ENCODE measurements at regions of chr3 and their contacts with region 1.

Region 1: DNA sequence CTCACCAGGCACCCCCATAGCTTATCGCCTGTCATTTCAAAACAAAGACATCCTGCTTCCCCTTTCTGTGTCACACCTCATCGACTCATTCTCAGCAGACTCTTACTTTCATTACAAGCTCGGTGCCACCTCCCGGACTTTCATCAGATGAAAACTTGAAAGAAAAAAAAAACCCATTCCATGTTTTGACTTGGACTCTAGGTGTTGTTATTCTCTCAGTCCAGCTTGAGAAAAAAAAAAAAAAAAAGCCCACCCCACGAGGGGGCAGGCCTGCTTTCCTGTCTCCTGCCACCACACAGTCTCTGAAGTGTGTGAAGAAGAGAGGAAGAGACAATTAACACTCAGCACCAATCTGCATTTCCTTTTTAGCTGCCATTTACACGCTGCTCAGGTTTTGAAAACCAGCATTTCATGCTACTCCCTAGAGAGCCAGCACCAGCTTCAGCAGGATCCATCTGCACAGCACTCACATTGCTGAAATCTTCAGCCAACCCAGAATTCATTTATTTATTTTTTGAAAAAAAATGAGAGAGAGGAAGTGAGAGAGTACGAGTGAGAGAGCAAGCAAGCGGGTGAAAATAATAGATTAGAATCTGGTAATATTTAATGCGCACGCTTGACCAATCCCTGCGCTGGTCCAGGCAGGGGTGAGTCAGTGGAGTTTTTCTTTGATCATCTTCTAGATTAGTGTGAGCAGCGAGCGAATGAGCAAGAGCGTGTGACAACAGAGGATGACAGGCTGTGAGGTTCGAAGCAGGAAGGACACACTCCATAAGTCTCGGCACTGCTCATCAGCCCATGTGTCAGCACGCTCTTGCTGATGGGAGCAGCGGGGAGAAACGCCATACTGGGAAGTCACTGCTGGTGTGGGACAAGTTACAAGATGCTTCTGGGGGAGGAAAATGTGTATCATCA is 23.5 kb downstream of the ZNF80 start:
- DNase-seq: peak; percentile 64
- ATAC-seq: peak; percentile 71
- H3K4me3 Mint-ChIP-seq: no peak overlapping the region
- H3K27ac Mint-ChIP-seq: no peak overlapping the region
- H3K4me1 Mint-ChIP-seq: peaks cover 27% of the 10 kb centered on the region
- H3K27me3 Mint-ChIP-seq: no peaks in the 10 kb centered on the region
- CTCF ChIP-seq: no peak

Region 2: DNA sequence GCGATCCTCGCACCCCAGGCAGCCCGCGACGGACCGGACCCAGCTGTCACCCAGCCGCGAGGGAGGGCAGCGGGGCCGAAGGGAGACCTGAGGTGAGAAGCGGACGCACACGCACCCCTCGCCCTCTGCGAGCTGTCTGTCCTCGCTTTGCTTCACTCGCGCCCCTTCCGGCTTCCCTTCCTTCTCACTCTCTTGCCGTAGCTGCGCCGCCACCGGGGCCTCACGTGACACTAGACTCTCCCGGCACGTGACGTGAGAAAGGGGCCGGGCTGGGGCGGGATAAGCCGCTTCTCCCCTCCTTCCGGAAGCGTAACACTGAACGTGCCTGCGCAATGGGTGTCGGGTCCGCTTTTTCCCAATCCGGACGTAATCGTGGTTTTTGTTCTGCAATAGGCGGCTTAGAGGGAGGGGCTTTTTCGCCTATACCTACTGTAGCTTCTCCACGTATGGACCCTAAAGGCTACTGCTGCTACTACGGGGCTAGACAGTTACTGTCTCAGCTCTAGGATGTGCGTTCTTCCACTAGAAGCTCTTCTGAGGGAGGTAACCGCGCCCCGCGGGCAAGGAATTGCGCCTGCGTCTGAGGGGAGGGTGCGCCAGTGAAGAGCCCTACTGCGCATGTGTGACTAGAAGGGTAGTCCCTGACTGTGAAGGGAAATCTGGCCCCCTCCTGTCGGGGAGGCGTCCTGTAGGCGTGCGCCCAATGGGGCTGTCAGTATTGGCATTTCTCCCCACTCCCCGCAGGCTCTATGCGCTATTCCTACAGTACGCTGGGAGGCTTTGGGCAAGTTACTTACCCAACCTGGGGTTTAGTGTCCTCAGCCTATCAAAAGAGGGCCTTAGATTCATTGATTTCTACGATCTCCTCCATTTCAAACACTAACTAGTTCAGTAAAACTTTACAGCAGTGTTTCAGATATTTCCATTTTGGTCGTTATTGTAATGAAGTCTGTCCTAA is 1651.9 kb before region 1 on chr3 and contains the starts of genes ATG3 and SLC35A5:
- CTCF ChIA-PET with region 1: no interaction called
- POLR2A ChIA-PET with region 1: no interaction called
- intact Hi-C with region 1: loop called (anchors 5 kb)
- DNase-seq: peak; percentile 99
- ATAC-seq: peak; percentile 80
- H3K4me3 Mint-ChIP-seq: peak within 1 kb of the TSS; percentile 99
- H3K27ac Mint-ChIP-seq: peak within 1 kb of the TSS; percentile 99
- H3K4me1 Mint-ChIP-seq: peaks cover 50% of the 10 kb centered on the region
- H3K27me3 Mint-ChIP-seq: no peaks in the 10 kb centered on the region
- CTCF ChIP-seq: no peak
- total RNA-seq, gene ATG3: 48.3 and 54.9 TPM in 2 replicates
- total RNA-seq, gene SLC35A5: 25.1 and 26.6 TPM in 2 replicates

Region 3: DNA sequence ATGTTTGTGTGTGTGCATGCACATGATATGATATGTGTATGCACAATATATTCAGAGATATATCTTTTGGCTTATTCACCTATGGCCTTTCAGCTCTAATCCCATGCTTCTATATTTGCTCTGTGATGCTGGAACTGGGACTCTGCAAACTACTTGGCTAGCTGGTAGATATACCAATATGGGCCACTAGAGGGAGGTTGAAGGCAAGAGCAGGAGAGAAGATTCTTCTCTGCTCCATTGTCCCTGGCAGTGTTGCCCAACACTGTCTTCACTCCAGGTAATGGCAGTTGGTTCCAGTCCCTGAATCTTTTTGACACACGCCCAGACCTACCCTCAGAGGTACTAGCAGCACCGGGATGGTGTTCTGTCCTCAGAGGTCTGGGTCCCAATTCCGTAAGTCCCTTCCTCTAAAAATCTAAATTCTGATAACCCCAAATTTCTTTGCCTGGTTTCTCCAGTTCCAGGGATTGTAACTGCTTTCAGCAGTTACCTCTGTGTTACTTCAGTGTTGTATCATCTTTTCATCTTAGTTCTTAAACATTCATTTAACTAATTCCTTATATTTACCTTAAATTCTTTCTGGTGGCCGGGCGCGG is 1178.4 kb before region 1 on chr3:
- CTCF ChIA-PET with region 1: no interaction called
- POLR2A ChIA-PET with region 1: no interaction called
- intact Hi-C with region 1: no loop called
- DNase-seq: no peak
- ATAC-seq: peak; percentile 88
- H3K4me3 Mint-ChIP-seq: no peak overlapping the region
- H3K27ac Mint-ChIP-seq: no peak overlapping the region
- H3K4me1 Mint-ChIP-seq: no peaks in the 10 kb centered on the region
- H3K27me3 Mint-ChIP-seq: no peaks in the 10 kb centered on the region
- CTCF ChIP-seq: no peak

Region 4: GRCh38 chr3:113731694-113732093 is 482.2 kb before region 1 on chr3:
- CTCF ChIA-PET with region 1: no interaction called
- POLR2A ChIA-PET with region 1: no interaction called
- intact Hi-C with region 1: no loop called
- DNase-seq: no peak
- ATAC-seq: no peak
- H3K4me3 Mint-ChIP-seq: no peak overlapping the region
- H3K27ac Mint-ChIP-seq: no peak overlapping the region
- H3K4me1 Mint-ChIP-seq: peaks cover 14% of the 10 kb centered on the region
- H3K27me3 Mint-ChIP-seq: no peaks in the 10 kb centered on the region
- CTCF ChIP-seq: no peak

Region 5: GRCh38 chr3:113985541-113985940 is 228.3 kb before region 1 on chr3:
- CTCF ChIA-PET with region 1: interaction called, 3 read pairs
- POLR2A ChIA-PET with region 1: interaction called, 10 read pairs
- intact Hi-C with region 1: no loop called
- DNase-seq: no peak
- ATAC-seq: peak; percentile 89
- H3K4me3 Mint-ChIP-seq: peak overlapping the region; percentile 56
- H3K27ac Mint-ChIP-seq: peak overlapping the region; percentile 88
- H3K4me1 Mint-ChIP-seq: peaks cover 57% of the 10 kb centered on the region
- H3K27me3 Mint-ChIP-seq: no peaks in the 10 kb centered on the region
- CTCF ChIP-seq: no peak

Region 6: GRCh38 chr3:114152519-114153151 is 61.2 kb before region 1 on chr3:
- CTCF ChIA-PET with region 1: interaction called, 25 read pairs
- POLR2A ChIA-PET with region 1: interaction called, 50 read pairs
- intact Hi-C with region 1: loop called (anchors 1 kb)
- DNase-seq: peak; percentile 78
- ATAC-seq: peak; percentile 98
- H3K4me3 Mint-ChIP-seq: peak overlapping the region; percentile 68
- H3K27ac Mint-ChIP-seq: peak overlapping the region; percentile 47
- H3K4me1 Mint-ChIP-seq: peaks cover 11% of the 10 kb centered on the region
- H3K27me3 Mint-ChIP-seq: no peaks in the 10 kb centered on the region
- CTCF ChIP-seq: peak; percentile 18

Region 7: GRCh38 chr3:114186501-114186900 is 27.4 kb before region 1 on chr3:
- CTCF ChIA-PET with region 1: no interaction called
- POLR2A ChIA-PET with region 1: no interaction called
- intact Hi-C with region 1: no loop called
- DNase-seq: no peak
- ATAC-seq: no peak
- H3K4me3 Mint-ChIP-seq: no peak overlapping the region
- H3K27ac Mint-ChIP-seq: no peak overlapping the region
- H3K4me1 Mint-ChIP-seq: no peaks in the 10 kb centered on the region
- H3K27me3 Mint-ChIP-seq: peaks cover 2% of the 10 kb centered on the region
- CTCF ChIP-seq: no peak

Region 8: DNA sequence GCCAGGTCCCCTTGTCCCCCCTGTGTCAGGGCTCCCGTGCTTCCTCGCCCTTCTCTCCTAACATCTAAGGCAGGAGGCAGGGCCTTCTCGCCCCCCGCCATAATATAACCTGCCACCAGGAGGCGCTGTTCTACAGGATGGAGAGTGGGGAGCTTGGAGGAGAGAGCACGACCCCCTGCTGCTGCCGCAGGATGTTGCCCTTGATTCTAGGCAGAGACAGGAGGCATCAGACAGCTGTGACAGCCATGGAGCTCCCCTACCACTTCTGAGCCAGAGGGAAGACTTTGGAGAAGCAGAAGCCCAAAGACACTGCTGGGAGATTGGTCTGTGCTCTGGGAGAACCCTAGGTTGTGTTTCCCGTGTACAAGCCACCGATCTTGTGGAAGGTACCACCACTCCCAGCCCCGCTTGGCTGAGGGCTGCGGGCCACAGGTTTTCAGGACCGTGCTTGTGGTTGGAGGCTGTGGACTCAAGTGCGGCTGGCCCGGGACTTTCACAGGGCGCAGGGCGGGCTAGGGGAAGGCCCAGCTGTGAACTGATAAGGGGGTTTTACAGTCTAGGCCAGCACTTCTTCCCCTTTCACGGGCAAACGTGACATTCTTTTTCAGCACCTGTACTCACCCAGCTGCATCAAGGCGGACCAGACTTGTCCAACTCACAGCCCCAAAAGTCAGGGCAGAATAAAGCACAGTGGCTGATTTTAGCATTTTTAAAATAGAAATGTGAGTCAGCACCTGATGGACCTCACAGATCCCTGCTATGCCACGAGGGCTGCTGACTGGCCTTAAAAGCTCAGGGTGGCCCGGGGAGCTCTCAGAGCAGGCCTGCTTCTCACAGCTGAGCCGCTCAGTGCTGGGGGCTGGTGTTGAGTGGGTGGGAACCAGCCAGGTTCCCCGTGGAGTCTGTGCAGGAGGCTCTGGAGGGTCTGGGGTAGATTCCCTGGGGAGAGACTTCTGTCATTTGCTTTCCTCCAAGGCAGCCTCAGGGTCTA is 77.3 kb after region 1 on chr3:
- CTCF ChIA-PET with region 1: interaction called, 66 read pairs
- POLR2A ChIA-PET with region 1: interaction called, 334 read pairs
- intact Hi-C with region 1: loop called (anchors 1 kb)
- DNase-seq: peak; percentile 88
- ATAC-seq: peak; percentile 85
- H3K4me3 Mint-ChIP-seq: peak overlapping the region; percentile 71
- H3K27ac Mint-ChIP-seq: peak overlapping the region; percentile 98
- H3K4me1 Mint-ChIP-seq: peaks cover 47% of the 10 kb centered on the region
- H3K27me3 Mint-ChIP-seq: no peaks in the 10 kb centered on the region
- CTCF ChIP-seq: peak; percentile 83

Region 9: GRCh38 chr3:114329823-114330222 is 115.9 kb after region 1 on chr3:
- CTCF ChIA-PET with region 1: no interaction called
- POLR2A ChIA-PET with region 1: interaction called, 17 read pairs
- intact Hi-C with region 1: loop called (anchors 1 kb)
- DNase-seq: no peak
- ATAC-seq: no peak
- H3K4me3 Mint-ChIP-seq: no peak overlapping the region
- H3K27ac Mint-ChIP-seq: peak overlapping the region; percentile 35
- H3K4me1 Mint-ChIP-seq: peaks cover 72% of the 10 kb centered on the region
- H3K27me3 Mint-ChIP-seq: no peaks in the 10 kb centered on the region
- CTCF ChIP-seq: no peak

Region 10: DNA sequence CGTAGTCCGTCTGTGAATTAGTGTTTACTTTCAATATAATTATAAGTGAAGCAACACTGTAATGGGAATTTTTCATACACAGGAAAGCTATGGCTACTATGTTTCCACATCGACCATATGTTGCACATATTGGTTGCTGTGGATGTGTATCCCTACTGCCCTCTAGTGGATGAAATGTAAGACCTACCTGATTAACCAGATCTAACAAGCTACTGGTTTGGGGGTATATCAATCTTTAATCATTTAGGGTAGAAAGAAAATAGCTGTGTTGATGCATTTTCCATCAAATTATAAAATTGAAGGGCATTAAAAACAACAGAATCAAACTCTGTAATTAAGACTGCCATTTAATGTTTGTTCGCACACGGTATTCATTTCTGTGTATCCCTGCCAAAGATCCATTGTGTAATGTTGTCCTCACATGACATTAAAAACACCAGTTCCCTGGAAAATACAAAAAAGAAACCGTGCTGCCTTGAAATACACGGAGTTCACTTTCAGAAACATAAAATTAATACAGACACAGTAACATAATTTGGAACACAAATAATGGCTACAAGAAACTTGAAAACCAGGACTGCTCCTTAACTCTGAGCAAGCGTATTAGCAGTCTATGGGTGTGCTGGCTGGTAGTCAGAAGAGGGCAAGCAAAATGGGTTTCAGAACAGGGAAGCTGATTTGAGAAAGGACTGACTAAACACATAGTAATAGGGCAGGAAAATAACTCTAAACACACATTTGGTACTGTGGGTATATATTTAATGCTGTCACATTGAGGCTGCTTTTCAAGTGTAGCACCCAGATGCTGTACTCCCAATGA is 205.1 kb after region 1 on chr3:
- CTCF ChIA-PET with region 1: interaction called, 11 read pairs
- POLR2A ChIA-PET with region 1: interaction called, 11 read pairs
- intact Hi-C with region 1: loop called (anchors 1 kb)
- DNase-seq: no peak
- ATAC-seq: peak; percentile 75
- H3K4me3 Mint-ChIP-seq: peak overlapping the region; percentile 64
- H3K27ac Mint-ChIP-seq: peak overlapping the region; percentile 83
- H3K4me1 Mint-ChIP-seq: peaks cover 45% of the 10 kb centered on the region
- H3K27me3 Mint-ChIP-seq: no peaks in the 10 kb centered on the region
- CTCF ChIP-seq: peak; percentile 22

Region 11: DNA sequence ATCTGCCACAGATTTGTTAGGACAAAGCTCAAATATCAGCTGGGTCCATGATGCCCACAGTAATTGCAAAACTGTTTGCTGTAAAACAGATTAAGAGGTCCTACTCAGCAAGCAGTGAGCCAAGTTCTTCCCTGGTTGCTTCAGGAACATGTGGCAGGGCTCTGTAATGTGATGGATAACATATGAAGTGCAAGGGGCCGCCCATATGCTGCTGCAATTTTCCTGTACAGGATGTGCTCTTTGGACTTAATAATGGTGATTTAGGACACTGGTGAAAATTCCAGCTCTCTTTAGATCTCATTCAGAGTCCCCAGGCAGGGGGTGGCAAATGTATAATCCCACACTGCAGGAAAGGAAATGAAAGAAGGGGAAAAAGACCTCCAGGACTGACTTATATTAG is 1942.0 kb after region 1 on chr3:
- CTCF ChIA-PET with region 1: no interaction called
- POLR2A ChIA-PET with region 1: no interaction called
- intact Hi-C with region 1: no loop called
- DNase-seq: no peak
- ATAC-seq: no peak
- H3K4me3 Mint-ChIP-seq: no peak overlapping the region
- H3K27ac Mint-ChIP-seq: no peak overlapping the region
- H3K4me1 Mint-ChIP-seq: no peaks in the 10 kb centered on the region
- H3K27me3 Mint-ChIP-seq: no peaks in the 10 kb centered on the region
- CTCF ChIP-seq: no peak

Measured in activated B cell treated with CpG ODN at 0.5 μM for 24 hours (primary cell).